Common myeloid progenitor, CD34-positive (primary cell): ENCODE measurements at regions of chr12 and their contacts with region 1.

Region 1: DNA sequence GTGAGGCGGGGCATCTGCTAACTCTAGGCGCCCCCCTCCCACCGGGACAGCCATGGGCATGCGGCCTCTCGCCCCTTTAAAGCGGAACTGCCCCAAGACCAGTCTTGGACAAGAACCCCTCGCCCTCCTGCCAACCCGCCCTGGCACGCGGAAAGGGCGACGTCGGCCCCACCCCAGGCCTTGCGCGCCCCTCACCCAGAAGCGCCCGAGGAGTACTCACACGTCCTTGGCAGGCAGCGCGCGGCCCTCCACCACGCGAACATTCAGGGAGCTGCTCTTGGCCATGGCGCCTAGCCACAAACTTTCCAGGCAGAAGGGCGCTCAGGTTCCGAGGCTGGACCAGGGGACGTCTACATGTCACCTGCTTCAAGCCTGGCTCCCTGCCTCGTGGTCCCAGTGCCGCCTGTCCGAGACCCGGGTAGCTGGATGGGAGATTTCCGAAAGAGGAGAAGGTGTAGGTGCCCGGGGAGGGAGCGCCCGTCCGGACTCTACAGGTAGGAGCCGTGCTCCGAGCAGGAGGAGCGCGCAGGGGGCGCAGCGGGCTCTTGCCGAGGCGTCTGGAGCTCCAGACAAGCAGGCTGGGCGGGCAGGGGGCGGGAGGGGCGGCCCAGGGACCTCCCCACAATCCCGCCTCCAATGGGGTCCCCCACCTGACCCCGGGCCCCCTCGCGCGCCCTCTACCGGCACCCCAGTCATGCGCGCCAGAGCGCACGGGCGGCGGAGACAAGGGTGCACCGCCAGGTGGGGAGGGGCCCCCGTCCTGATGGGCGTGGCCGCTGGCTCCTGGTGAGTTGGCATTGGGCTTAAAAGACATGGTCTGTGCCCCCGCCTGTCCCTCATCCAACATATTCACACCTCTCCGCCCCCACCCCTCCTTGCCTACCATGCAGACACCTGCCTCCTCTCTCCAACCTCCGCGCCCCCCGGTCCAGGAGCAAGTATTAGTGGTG is at the start of gene RASAL1:
- DNase-seq: peak; percentile 81 to 88 (median 85)
- H3K4me3 ChIP-seq: peak within 1 kb of the TSS; percentile 17 to 74 (median 53)
- H3K27ac ChIP-seq: no peak within 1 kb of the TSS
- H3K4me1 ChIP-seq: peaks cover 3 to 27% (median 19%) of the 10 kb centered on the region in 4 experiments
- H3K27me3 ChIP-seq: peaks cover 0 to 10% (median 2%) of the 10 kb centered on the region in 5 experiments

Region 2: GRCh38 chr12:112971248-112971647 is 164.2 kb before region 1 on chr12:
- CTCF ChIA-PET with region 1: no interaction called
- POLR2A ChIA-PET with region 1: no interaction called
- DNase-seq: peak; percentile 57 to 94 (median 91)
- H3K4me3 ChIP-seq: peak overlapping the region in 1 of 7 experiments; percentile 36
- H3K27ac ChIP-seq: no peak overlapping the region
- H3K4me1 ChIP-seq: peaks cover 1 to 27% (median 16%) of the 10 kb centered on the region in 4 experiments
- H3K27me3 ChIP-seq: no peaks in the 10 kb centered on the region

Region 3: DNA sequence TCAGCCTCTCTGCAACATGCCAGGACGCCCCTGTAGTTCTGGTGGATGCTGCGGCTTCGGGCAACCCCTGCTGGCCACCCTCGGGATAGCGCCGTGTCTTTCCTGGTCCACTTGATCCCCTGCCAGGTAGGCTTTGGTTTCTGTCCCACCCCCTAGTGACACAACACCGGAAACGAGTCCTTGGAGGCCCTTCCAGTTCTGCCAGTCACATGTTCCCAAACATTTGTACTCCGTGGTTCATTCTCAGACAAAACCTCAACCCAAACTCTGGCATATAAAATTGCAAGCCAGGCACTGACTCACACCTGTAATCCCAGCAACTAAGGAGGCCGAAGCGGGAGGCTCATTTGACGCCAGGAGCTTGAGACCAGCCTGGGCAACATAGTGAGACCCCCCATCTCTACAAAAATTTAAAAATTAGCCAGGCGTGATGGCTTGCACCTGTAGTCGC is 37.0 kb before region 1 on chr12:
- CTCF ChIA-PET with region 1: interaction called, 14 read pairs
- POLR2A ChIA-PET with region 1: no interaction called
- DNase-seq: peak; percentile 72 to 79 (median 79)
- H3K4me3 ChIP-seq: no peak overlapping the region
- H3K27ac ChIP-seq: no peak overlapping the region
- H3K4me1 ChIP-seq: peaks cover 0 to 6% (median under 1%) of the 10 kb centered on the region in 4 experiments
- H3K27me3 ChIP-seq: peaks cover 0 to under 1% (median 0%) of the 10 kb centered on the region in 5 experiments

Region 4: GRCh38 chr12:113120670-113121370 is 14.6 kb before region 1 on chr12:
- CTCF ChIA-PET with region 1: interaction called, 22 read pairs
- POLR2A ChIA-PET with region 1: no interaction called
- DNase-seq: no peak
- H3K4me3 ChIP-seq: no peak overlapping the region
- H3K27ac ChIP-seq: no peak overlapping the region
- H3K4me1 ChIP-seq: no peaks in the 10 kb centered on the region
- H3K27me3 ChIP-seq: no peaks in the 10 kb centered on the region

Region 5: GRCh38 chr12:113152835-113153814 is 17.7 kb after region 1 on chr12:
- CTCF ChIA-PET with region 1: interaction called, 149 read pairs
- POLR2A ChIA-PET with region 1: interaction called, 3 read pairs
- DNase-seq: peak; percentile 74 to 88 (median 87)
- H3K4me3 ChIP-seq: peak overlapping the region; percentile 23 to 67 (median 61)
- H3K27ac ChIP-seq: no peak overlapping the region
- H3K4me1 ChIP-seq: peaks cover 0 to 51% (median 45%) of the 10 kb centered on the region in 4 experiments
- H3K27me3 ChIP-seq: peaks cover 0 to 32% (median 12%) of the 10 kb centered on the region in 5 experiments